ENCODE measurements at regions of chr6 and their contacts with region 1.

Region 1: GRCh38 chr6:90222724-90223198 is 73.9 kb downstream of the BACH2 start:
- DNase-seq: no peak

Region 2: DNA sequence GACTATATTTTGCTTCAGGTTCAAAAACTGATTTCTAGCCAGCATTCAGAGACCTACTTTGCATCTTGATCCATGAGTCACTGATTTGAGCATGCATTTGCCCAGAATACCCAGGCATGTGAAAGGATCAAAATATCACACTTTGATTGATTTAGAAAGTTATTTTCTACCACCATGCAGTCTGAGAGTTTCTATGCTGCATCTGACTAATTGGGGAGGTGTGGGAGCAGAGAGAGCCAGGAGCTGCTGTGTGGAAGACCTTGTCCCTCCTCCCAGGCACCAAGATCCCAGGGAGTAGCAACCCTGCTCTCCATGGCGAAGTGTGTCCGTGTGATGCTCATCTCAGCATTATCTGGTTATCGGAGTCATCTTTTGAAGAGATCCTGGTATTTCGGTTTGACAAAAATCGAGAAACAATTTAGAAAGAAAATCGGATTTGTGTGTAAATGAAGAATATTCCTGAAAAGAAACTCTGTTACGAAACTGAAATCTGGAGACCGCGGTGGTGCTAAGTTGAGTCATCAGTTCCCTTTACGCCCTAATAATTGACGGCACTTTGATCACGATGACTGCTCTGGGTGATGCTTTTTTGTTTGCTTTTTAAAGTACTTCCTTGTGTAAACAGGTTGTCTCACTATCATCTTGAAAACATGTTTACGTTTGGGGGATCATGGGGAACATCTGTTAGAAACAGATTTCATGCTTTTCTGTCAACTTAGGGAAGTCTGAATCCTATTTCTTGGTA is 119.5 kb before region 1 on chr6:
- intact Hi-C with region 1: loop called (anchors 10 kb)
- DNase-seq: no peak

Region 3: DNA sequence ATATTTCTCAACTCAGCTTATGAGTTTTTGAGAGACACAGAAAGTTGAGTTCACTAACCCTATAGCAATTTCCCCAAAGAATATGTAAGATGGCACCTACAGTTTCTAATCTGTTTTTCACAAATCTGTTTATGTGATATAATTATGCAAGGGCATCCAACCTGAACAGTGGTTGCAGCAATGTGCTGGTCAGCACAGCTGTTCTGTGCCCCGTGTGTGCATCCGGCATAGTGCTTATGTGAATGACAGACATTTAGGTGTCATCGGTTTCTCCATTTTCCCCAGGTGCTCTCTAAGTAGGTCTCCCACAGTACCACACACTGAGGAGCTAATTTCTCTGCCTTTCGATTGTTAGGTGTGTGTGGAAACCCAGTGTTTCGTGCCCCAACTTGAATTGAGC is 81.5 kb after region 1 on chr6:
- intact Hi-C with region 1: no loop called
- DNase-seq: no peak

Measured in posterior cingulate gyrus (tissue), 11 donors.